ENCODE measurements at regions of chr1 and their contacts with region 1.

Region 1: DNA sequence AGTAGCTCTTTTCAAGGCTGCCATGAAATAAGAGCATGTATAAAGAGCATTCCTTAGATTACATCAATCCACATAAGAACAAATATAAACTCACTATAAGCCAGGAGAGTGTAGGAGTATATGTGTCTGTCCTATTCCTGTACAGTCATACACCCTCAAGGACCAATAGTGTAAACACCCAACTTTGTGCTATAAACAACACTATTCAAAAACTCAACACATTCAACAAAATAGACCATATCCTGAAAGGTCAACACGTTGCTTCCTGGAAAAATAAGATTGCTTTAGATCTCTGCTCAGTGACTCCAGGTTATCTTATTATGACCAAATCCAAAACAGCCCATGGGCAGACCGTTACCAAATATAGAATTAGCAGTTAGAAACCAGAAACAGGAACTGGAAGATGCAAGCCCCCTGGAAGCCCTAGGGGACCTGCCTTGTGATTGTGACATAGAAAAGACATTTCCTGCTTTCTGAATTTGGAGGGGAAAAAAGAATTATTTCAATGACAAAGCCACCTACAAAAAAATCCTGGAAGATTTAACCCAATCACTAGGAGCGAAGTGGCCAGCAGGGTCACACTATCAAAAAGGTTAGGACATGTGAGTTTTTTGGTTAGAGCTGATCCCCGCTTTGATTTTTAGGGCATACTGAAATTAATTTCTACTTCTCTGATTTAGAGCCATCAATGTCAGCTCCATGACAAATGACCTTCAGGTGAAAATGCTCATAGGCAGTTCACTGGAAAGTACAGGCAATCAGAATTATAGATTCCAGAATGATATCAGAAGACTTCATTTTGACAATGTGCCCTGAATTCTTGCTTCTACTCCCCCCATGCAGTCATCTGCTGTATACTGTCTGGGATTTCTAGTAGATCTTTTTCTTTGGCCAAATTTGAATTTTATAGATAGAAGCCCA is 59.9 kb downstream of the LRRC8C start:
- DNase-seq: peak; percentile 77
- ATAC-seq: peak; percentile 63
- H3K4me3 ChIP-seq: peak overlapping the region in 1 of 5 experiments; percentile 6
- H3K4me3 Mint-ChIP-seq: peak overlapping the region; percentile 35
- H3K27ac ChIP-seq: peak overlapping the region; percentile 68 to 93
- H3K27ac Mint-ChIP-seq: peak overlapping the region; percentile 42
- H3K4me1 ChIP-seq: peaks cover 37 to 48% of the 10 kb centered on the region in 2 donors
- H3K4me1 Mint-ChIP-seq: peaks cover 54% of the 10 kb centered on the region
- H3K27me3 ChIP-seq: no peaks in the 10 kb centered on the region
- H3K27me3 Mint-ChIP-seq: no peaks in the 10 kb centered on the region
- CTCF ChIP-seq: no peak

Region 2: GRCh38 chr1:89657886-89658285 is 35.0 kb before region 1 on chr1:
- CTCF ChIA-PET with region 1: no interaction called
- POLR2A ChIA-PET with region 1: no interaction called
- intact Hi-C with region 1: loop called (anchors 5 kb)
- DNase-seq: no peak
- ATAC-seq: no peak
- H3K4me3 ChIP-seq: no peak overlapping the region
- H3K4me3 Mint-ChIP-seq: no peak overlapping the region
- H3K27ac ChIP-seq: peak overlapping the region in 1 of 2 donors; percentile 27
- H3K27ac Mint-ChIP-seq: peak overlapping the region; percentile 29
- H3K4me1 ChIP-seq: peaks cover 26 to 27% of the 10 kb centered on the region in 2 donors
- H3K4me1 Mint-ChIP-seq: peaks cover 58% of the 10 kb centered on the region
- H3K27me3 ChIP-seq: no peaks in the 10 kb centered on the region
- H3K27me3 Mint-ChIP-seq: no peaks in the 10 kb centered on the region
- CTCF ChIP-seq: no peak

Region 3: DNA sequence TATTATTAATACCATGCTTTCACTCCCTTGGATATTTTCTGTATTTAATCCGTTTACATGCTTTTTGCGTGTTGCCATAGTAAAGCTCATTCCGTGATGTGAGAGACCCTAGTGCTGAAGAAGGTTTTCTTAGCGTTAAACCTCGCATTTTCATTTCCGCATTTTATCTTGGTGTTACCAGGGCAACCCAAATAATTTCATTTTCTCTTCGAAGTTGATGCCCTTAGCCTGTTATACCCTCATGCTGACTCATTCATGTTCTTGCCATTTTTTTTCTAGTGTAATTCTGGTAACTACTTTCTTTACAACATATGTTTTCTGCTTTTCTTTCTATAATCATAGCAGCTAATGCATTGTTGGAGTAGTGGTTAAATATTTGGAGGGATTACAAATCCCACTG is 22.7 kb before region 1 on chr1:
- CTCF ChIA-PET with region 1: interaction called, 4 read pairs
- POLR2A ChIA-PET with region 1: no interaction called
- intact Hi-C with region 1: loop called (anchors 1 kb)
- DNase-seq: peak; percentile 90
- ATAC-seq: peak; percentile 98
- H3K4me3 ChIP-seq: no peak overlapping the region
- H3K4me3 Mint-ChIP-seq: peak overlapping the region; percentile 61
- H3K27ac ChIP-seq: peak overlapping the region; percentile 19 to 57
- H3K27ac Mint-ChIP-seq: peak overlapping the region; percentile 59
- H3K4me1 ChIP-seq: peaks cover 21 to 22% of the 10 kb centered on the region in 2 donors
- H3K4me1 Mint-ChIP-seq: peaks cover 44% of the 10 kb centered on the region
- H3K27me3 ChIP-seq: no peaks in the 10 kb centered on the region
- H3K27me3 Mint-ChIP-seq: no peaks in the 10 kb centered on the region
- CTCF ChIP-seq: no peak

Region 4: DNA sequence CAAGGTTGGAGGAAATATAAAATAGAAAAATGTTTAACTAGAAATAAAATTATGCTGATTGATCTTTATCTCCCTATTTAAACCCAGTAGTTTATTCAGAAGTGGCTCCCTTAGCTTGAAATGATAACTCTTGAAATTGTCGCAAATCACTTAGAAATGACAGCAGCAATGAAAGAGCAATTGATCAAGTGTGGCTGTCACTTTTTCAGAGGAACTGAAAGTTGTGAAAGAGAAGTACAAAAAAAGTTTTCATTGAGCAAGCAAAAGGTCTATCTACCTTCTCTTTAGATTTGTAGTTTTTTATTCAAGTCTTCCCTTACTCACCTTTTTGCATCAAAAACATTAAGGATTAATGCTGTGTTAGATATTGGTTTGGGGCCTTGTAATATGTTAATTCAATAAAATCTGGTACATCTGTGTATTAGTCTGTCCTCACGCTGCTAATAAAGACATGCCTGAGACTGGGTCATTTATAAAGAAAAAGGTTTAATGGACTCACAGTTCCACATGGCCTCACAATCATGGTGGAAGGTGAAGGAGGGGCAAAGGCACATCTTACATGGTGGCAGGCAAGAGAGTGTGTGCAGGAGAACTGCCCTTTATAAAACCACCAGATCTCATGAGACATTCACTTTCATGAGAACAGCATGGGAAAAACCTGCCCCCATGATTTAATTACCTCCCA is 11.7 kb before region 1 on chr1:
- CTCF ChIA-PET with region 1: interaction called, 3 read pairs
- POLR2A ChIA-PET with region 1: no interaction called
- intact Hi-C with region 1: loop called (anchors 1 kb)
- DNase-seq: peak; percentile 58
- ATAC-seq: peak; percentile 60
- H3K4me3 ChIP-seq: no peak overlapping the region
- H3K4me3 Mint-ChIP-seq: peak overlapping the region; percentile 24
- H3K27ac ChIP-seq: peak overlapping the region in 1 of 2 donors; percentile 66
- H3K27ac Mint-ChIP-seq: peak overlapping the region; percentile 54
- H3K4me1 ChIP-seq: peaks cover 12 to 13% of the 10 kb centered on the region in 2 donors
- H3K4me1 Mint-ChIP-seq: peaks cover 29% of the 10 kb centered on the region
- H3K27me3 ChIP-seq: no peaks in the 10 kb centered on the region
- H3K27me3 Mint-ChIP-seq: no peaks in the 10 kb centered on the region
- CTCF ChIP-seq: no peak

Region 5: DNA sequence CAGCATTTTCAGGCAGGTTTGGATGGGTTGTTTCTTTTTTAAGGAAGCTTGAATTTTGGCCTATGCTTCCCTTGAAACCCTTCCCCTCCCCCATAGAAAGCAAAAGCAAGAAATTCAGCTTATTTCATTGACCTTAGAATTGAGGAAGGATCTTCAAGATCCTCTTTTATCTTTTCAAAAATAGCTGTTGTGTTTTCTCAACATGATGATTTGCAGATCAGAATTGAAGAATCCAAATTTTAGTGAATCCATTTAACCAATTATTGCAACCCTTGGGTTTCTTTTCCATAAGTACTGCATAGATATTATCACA is 13.8 kb after region 1 on chr1:
- CTCF ChIA-PET with region 1: interaction called, 7 read pairs
- POLR2A ChIA-PET with region 1: no interaction called
- intact Hi-C with region 1: loop called (anchors 2 kb)
- DNase-seq: peak; percentile 65
- ATAC-seq: peak; percentile 63
- H3K4me3 ChIP-seq: peak overlapping the region in 2 of 5 experiments; percentile 8 to 16
- H3K4me3 Mint-ChIP-seq: peak overlapping the region; percentile 64
- H3K27ac ChIP-seq: peak overlapping the region in 1 of 2 donors; percentile 52
- H3K27ac Mint-ChIP-seq: peak overlapping the region; percentile 27
- H3K4me1 ChIP-seq: peaks cover 32 to 34% of the 10 kb centered on the region in 2 donors
- H3K4me1 Mint-ChIP-seq: peaks cover 34% of the 10 kb centered on the region
- H3K27me3 ChIP-seq: no peaks in the 10 kb centered on the region
- H3K27me3 Mint-ChIP-seq: no peaks in the 10 kb centered on the region
- CTCF ChIP-seq: no peak

Region 6: GRCh38 chr1:89719502-89720306 is 26.8 kb after region 1 on chr1:
- CTCF ChIA-PET with region 1: interaction called, 5 read pairs
- POLR2A ChIA-PET with region 1: no interaction called
- intact Hi-C with region 1: loop called (anchors 2 kb)
- DNase-seq: peak; percentile 62
- ATAC-seq: peak; percentile 88
- H3K4me3 ChIP-seq: peak overlapping the region in 2 of 5 experiments; percentile 19 to 30
- H3K4me3 Mint-ChIP-seq: peak overlapping the region; percentile 64
- H3K27ac ChIP-seq: peak overlapping the region; percentile 11 to 45
- H3K27ac Mint-ChIP-seq: peak overlapping the region; percentile 42
- H3K4me1 ChIP-seq: peaks cover 38 to 46% of the 10 kb centered on the region in 2 donors
- H3K4me1 Mint-ChIP-seq: peaks cover 53% of the 10 kb centered on the region
- H3K27me3 ChIP-seq: no peaks in the 10 kb centered on the region
- H3K27me3 Mint-ChIP-seq: no peaks in the 10 kb centered on the region
- CTCF ChIP-seq: peak; percentile 18

Region 7: DNA sequence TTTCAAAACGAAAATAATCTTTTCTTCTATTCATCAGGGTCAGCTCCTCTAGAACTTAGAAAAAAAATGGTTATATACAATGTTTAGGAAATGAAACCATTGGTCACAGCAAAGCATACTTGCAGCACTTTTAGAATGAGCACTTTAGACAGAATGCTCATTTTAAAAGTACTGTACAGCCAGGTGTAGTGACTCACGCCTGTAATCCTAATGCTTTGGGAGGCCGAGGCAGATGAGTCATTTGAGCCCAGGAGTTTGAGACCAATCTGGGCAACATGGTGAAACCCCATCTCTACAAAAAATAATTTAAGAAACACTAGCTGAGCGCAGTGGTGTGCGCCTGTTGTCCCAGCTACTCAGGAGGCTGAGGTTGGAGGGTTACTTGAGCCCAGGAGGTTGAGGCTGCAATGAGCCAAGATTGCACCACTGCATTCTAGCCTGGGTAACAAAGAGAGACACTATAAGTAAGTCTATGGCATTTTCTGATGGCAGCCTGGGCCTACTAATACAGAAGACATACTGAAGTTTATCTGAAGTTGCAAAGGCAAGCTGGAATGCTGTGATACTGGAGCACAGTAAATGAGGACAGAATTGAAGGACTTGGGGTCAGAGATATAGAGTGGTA is 253.1 kb after region 1 on chr1:
- CTCF ChIA-PET with region 1: no interaction called
- POLR2A ChIA-PET with region 1: no interaction called
- intact Hi-C with region 1: no loop called
- DNase-seq: no peak
- ATAC-seq: no peak
- H3K4me3 ChIP-seq: no peak overlapping the region
- H3K4me3 Mint-ChIP-seq: no peak overlapping the region
- H3K27ac ChIP-seq: no peak overlapping the region
- H3K27ac Mint-ChIP-seq: no peak overlapping the region
- H3K4me1 ChIP-seq: no peaks in the 10 kb centered on the region
- H3K4me1 Mint-ChIP-seq: no peaks in the 10 kb centered on the region
- H3K27me3 ChIP-seq: no peaks in the 10 kb centered on the region
- H3K27me3 Mint-ChIP-seq: no peaks in the 10 kb centered on the region
- CTCF ChIP-seq: no peak

Measured in B cell (primary cell).